Endothelial cell of umbilical vein (primary cell): ENCODE measurements at regions of chr4 and their contacts with region 1.

Region 1: GRCh38 chr4:94406668-94407437 is 44.9 kb upstream of the PDLIM5 start:
- DNase-seq: peak; percentile 86
- H3K4me3 ChIP-seq: no peak overlapping the region
- H3K27ac ChIP-seq: no peak overlapping the region
- H3K4me1 ChIP-seq: peaks cover 9% of the 10 kb centered on the region
- H3K27me3 ChIP-seq: no peaks in the 10 kb centered on the region
- CTCF ChIP-seq: peak; percentile 74 to 77
- POLR2A ChIP-seq: no peak

Region 2: DNA sequence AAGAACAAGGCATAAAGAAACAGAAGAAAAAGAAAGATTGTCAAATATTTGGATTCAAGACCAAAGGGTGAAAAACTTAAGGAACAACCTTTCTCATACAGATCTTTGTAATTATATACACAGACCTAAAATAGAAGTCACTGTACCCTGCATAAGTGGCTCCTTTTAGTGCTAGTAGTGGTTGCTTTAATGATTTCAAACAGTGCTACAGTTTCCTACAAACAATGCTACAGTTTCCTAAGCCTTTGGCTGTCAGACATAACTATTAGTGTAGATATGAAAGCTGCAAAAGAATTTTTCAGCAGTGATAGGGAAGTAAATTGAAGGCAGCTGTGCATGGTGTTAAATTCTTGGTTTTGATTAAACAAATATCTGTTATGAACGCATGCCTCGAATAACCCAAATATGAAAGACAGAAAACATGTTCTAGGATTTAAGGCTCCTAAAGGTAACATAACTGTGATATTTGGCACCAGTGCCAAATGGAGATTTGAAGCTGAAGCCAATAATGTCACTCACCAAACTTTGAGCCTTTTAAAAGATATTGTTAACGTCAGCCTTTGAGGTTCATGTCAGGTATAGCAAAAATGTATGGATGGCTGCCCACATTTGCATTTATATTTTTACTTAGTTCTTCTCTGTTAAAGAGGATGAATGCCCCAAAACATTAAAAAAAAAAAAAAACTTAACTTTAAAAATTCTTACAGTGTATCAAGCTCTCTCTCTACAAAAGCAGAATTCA is 162.6 kb before region 1 on chr4:
- CTCF ChIA-PET with region 1: no interaction called
- POLR2A ChIA-PET with region 1: no interaction called
- dilution Hi-C with region 1: no loop called
- intact Hi-C with region 1: no loop called
- DNase-seq: no peak
- H3K4me3 ChIP-seq: no peak overlapping the region
- H3K27ac ChIP-seq: no peak overlapping the region
- H3K4me1 ChIP-seq: no peaks in the 10 kb centered on the region
- H3K27me3 ChIP-seq: no peaks in the 10 kb centered on the region
- CTCF ChIP-seq: no peak
- POLR2A ChIP-seq: no peak

Region 3: DNA sequence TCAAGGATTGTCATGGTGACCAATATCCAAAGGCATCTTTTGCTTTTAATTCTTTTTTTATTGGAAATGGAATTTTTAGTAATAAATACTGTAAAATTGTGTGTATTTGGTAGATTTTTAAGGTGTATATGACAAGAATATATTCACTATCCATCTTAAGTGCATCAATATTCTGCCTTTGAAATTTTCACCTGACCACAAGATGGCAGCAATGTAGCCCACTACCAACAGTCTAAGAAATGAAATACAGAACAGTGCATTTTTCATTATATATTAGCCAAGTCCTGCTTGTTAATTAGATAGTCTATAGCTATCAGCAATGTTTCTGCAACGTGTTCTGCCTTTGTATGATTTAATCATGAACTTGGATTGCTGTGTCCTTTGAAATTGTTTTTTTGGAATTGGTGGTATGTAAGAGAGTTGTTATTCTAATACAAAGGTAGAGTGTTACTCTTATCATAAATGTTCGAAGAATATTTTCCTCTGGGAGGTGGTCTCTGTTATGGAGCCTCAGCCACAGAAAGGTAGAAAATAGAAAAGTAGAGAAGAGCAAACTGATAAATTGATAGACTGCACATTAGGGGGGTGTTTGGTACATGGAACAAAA is 102.4 kb before region 1 on chr4:
- CTCF ChIA-PET with region 1: interaction called, 8 read pairs
- POLR2A ChIA-PET with region 1: no interaction called
- dilution Hi-C with region 1: no loop called
- intact Hi-C with region 1: loop called (anchors 5 kb)
- DNase-seq: peak; percentile 66
- H3K4me3 ChIP-seq: no peak overlapping the region
- H3K27ac ChIP-seq: no peak overlapping the region
- H3K4me1 ChIP-seq: peaks cover 20% of the 10 kb centered on the region
- H3K27me3 ChIP-seq: no peaks in the 10 kb centered on the region
- CTCF ChIP-seq: peak; percentile 44 to 45
- POLR2A ChIP-seq: no peak

Region 4: DNA sequence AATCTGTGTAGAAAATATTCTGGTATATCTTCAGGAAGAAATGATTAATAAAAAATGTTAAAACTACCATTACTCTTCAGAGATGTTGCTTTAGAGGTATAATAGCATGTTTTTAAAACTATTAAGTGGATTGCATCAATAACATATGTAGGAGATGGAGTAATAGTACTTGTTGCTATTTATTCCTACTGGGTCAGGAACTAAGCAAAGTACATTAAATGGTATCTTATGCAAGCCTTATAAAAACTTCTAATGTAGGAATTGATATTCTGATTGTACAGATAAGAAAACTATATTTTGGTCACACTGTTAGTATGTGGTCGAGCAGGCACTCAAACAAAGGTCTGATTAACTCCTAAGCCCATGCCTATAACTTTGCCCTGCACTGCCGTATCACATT is 13.5 kb after region 1 on chr4:
- CTCF ChIA-PET with region 1: interaction called, 14 read pairs
- POLR2A ChIA-PET with region 1: no interaction called
- dilution Hi-C with region 1: no loop called
- intact Hi-C with region 1: no loop called
- DNase-seq: no peak
- H3K4me3 ChIP-seq: no peak overlapping the region
- H3K27ac ChIP-seq: no peak overlapping the region
- H3K4me1 ChIP-seq: no peaks in the 10 kb centered on the region
- H3K27me3 ChIP-seq: no peaks in the 10 kb centered on the region
- CTCF ChIP-seq: no peak
- POLR2A ChIP-seq: no peak

Region 5: GRCh38 chr4:94507708-94508107 is 100.9 kb after region 1 on chr4:
- CTCF ChIA-PET with region 1: interaction called, 12 read pairs
- POLR2A ChIA-PET with region 1: no interaction called
- dilution Hi-C with region 1: no loop called
- intact Hi-C with region 1: no loop called
- DNase-seq: peak; percentile 60
- H3K4me3 ChIP-seq: no peak overlapping the region
- H3K27ac ChIP-seq: no peak overlapping the region
- H3K4me1 ChIP-seq: peaks cover 21% of the 10 kb centered on the region
- H3K27me3 ChIP-seq: no peaks in the 10 kb centered on the region
- CTCF ChIP-seq: no peak
- POLR2A ChIP-seq: no peak

Region 6: DNA sequence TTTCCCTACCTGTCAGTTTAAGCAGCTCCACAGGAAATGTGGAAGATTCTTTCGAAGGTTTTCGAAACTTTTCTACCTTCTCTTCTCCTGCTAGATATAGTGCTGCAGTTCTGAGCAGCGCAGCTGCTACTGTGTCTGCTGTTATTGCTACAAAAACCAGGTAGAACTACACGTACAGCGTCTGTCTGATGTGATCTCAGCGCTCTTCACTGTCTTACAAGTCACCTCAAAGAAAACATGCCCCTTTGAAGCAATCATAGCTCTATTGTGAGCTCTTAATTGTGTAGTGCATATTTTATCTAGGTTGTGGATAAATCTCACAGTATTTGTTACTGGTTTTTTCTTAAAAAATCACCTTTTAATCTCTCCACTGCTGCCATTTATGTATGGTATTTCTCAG is 203.3 kb after region 1 on chr4:
- CTCF ChIA-PET with region 1: interaction called, 10 read pairs
- POLR2A ChIA-PET with region 1: no interaction called
- dilution Hi-C with region 1: no loop called
- intact Hi-C with region 1: no loop called
- DNase-seq: no peak
- H3K4me3 ChIP-seq: no peak overlapping the region
- H3K27ac ChIP-seq: no peak overlapping the region
- H3K4me1 ChIP-seq: peaks cover 6% of the 10 kb centered on the region
- H3K27me3 ChIP-seq: no peaks in the 10 kb centered on the region
- CTCF ChIP-seq: no peak
- POLR2A ChIP-seq: no peak

Region 7: GRCh38 chr4:94728056-94728766 is 321.4 kb after region 1 on chr4:
- CTCF ChIA-PET with region 1: interaction called, 13 read pairs
- POLR2A ChIA-PET with region 1: no interaction called
- dilution Hi-C with region 1: no loop called
- intact Hi-C with region 1: no loop called
- DNase-seq: no peak
- H3K4me3 ChIP-seq: no peak overlapping the region
- H3K27ac ChIP-seq: no peak overlapping the region
- H3K4me1 ChIP-seq: no peaks in the 10 kb centered on the region
- H3K27me3 ChIP-seq: no peaks in the 10 kb centered on the region
- CTCF ChIP-seq: no peak
- POLR2A ChIP-seq: no peak